Sigmoid colon (tissue), 7 donors: ENCODE measurements at regions of chr11 and their contacts with region 1.

Region 1: DNA sequence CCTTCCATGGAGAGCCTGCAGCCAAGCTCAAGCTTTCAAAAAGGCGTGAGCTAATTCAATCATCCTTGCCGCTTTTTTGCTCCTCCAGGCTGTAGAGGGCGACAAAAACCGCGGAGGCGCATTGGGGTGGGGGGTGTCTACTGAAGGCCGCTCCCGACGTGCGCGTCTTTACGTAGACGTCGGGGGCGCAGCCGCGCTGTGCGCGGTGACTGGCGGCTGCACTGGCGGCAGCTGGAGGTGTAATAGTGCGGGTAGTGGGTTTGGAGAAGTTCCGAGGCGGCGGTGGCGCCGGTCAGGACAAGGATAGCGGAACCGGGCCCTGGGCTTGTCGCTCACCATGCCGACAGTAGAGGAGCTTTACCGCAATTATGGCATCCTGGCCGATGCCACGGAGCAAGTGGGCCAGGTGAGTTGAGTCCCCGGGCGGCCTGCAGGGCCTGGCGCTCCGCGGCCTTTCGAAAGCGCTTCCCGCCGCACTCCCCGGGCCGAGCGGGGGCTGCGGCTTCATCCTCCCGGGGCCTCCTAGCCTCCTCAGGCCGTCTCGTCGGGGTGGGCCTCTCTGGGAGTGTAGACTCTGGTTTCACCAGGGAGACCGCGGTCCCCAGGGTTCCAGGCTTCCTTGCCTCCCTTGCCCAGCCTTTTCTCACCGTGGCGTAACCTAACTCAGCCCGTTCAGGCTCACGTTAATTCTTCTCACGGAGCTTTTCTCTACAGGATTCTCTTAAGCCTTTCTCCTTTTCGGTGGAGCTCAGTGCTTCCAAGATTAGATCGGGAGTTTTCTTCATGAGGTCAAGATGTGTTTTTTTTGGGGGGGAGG is at the start of gene API5:
- DNase-seq: peak; percentile 92
- H3K4me3 ChIP-seq: peak within 1 kb of the TSS; percentile 75 to 86 (median 79)
- H3K27ac ChIP-seq: peak within 1 kb of the TSS; percentile 83 to 89 (median 86)
- H3K4me1 ChIP-seq: peaks cover 0 to 27% (median 22%) of the 10 kb centered on the region in 4 donors
- H3K27me3 ChIP-seq: no peaks in the 10 kb centered on the region
- CTCF ChIP-seq: peak in 3 of 4 experiments; percentile 38 to 63 (median 49)
- EP300 ChIP-seq: no peak
- POLR2A ChIP-seq: peak; percentile 65 to 82
- total RNA-seq, gene API5: 73.7 to 125 (median 113) TPM

Region 2: GRCh38 chr11:42337786-42338455 is 974.1 kb before region 1 on chr11:
- intact Hi-C with region 1: no loop called
- DNase-seq: no peak
- H3K4me3 ChIP-seq: no peak overlapping the region
- H3K27ac ChIP-seq: no peak overlapping the region
- H3K4me1 ChIP-seq: no peaks in the 10 kb centered on the region
- H3K27me3 ChIP-seq: no peaks in the 10 kb centered on the region
- CTCF ChIP-seq: no peak
- EP300 ChIP-seq: no peak
- POLR2A ChIP-seq: no peak

Region 3: GRCh38 chr11:43358801-43359421 is 46.9 kb after region 1 on chr11 and contains the start of gene TTC17:
- intact Hi-C with region 1: loop called (anchors 2 kb)
- DNase-seq: peak; percentile 96
- H3K4me3 ChIP-seq: peak within 1 kb of the TSS; percentile 84 to 89 (median 87)
- H3K27ac ChIP-seq: peak within 1 kb of the TSS; percentile 84 to 89 (median 88)
- H3K4me1 ChIP-seq: peaks cover 0 to 28% (median 22%) of the 10 kb centered on the region in 4 donors
- H3K27me3 ChIP-seq: no peaks in the 10 kb centered on the region
- CTCF ChIP-seq: no peak
- EP300 ChIP-seq: no peak
- POLR2A ChIP-seq: peak; percentile 79 to 80
- total RNA-seq, gene TTC17: 79.2 to 102 (median 97.7) TPM